ENCODE measurements at regions of chr11 and their contacts with region 1.

Region 1: DNA sequence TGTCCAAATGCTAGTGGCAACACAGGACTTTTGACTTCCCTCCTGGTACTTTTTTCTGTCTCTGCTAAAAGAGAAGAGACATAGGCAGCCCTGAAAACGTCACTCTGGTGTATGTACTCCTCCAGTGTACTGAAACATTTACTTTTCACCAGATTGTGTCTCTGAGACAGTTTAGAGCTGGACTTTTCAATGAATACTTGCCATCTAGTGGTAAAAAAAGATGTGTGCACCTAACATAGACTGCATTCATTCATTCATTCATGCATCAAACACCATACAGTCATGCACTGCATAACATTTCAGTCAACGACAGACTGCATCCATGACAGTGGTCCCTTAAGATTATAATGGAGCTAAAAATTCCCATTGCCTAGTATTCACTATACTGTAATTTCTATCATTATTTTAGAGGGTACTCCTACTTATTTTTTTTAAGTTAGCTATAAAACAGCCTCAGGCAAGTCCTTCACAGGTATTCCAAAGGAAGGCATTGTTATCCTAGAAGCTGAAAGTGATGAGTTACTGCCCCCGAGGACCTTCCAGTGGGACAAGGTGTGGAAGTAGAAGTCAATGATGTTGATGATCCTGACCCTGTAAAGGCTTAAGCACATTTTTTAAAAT is 186.2 kb downstream of the SPON1 start:
- DNase-seq: no peak
- ATAC-seq: peak; percentile 47 to 83 (median 58)
- H3K4me3 ChIP-seq: no peak overlapping the region
- H3K27ac ChIP-seq: no peak overlapping the region
- H3K4me1 ChIP-seq: no peaks in the 10 kb centered on the region
- H3K27me3 ChIP-seq: peaks cover 0 to 8% (median 0%) of the 10 kb centered on the region in 7 donors
- CTCF ChIP-seq: peak; percentile 24 to 73 (median 62)

Region 2: GRCh38 chr11:13772223-13773046 is 376.3 kb before region 1 on chr11:
- intact Hi-C with region 1: loop called in 3 of 10 experiments (anchors 5 to 10 kb)
- DNase-seq: peak in 1 of 2 donors; percentile 7
- ATAC-seq: peak in 3 of 8 donors; percentile 46 to 62 (median 56)
- H3K4me3 ChIP-seq: no peak overlapping the region
- H3K27ac ChIP-seq: no peak overlapping the region
- H3K4me1 ChIP-seq: no peaks in the 10 kb centered on the region
- H3K27me3 ChIP-seq: peaks cover 0 to 46% (median 28%) of the 10 kb centered on the region in 7 donors
- CTCF ChIP-seq: peak; percentile 14 to 65 (median 53)

Region 3: GRCh38 chr11:13955971-13956421 is 192.8 kb before region 1 on chr11:
- intact Hi-C with region 1: loop called in 9 of 10 experiments (anchors 1 to 5 kb)
- DNase-seq: peak in 1 of 2 donors; percentile 65
- ATAC-seq: peak; percentile 34 to 76 (median 66)
- H3K4me3 ChIP-seq: no peak overlapping the region
- H3K27ac ChIP-seq: no peak overlapping the region
- H3K4me1 ChIP-seq: peaks cover 0 to 6% (median 0%) of the 10 kb centered on the region in 9 donors
- H3K27me3 ChIP-seq: peaks cover 0 to 93% (median 44%) of the 10 kb centered on the region in 7 donors
- CTCF ChIP-seq: peak; percentile 66 to 92 (median 85)

Region 4: DNA sequence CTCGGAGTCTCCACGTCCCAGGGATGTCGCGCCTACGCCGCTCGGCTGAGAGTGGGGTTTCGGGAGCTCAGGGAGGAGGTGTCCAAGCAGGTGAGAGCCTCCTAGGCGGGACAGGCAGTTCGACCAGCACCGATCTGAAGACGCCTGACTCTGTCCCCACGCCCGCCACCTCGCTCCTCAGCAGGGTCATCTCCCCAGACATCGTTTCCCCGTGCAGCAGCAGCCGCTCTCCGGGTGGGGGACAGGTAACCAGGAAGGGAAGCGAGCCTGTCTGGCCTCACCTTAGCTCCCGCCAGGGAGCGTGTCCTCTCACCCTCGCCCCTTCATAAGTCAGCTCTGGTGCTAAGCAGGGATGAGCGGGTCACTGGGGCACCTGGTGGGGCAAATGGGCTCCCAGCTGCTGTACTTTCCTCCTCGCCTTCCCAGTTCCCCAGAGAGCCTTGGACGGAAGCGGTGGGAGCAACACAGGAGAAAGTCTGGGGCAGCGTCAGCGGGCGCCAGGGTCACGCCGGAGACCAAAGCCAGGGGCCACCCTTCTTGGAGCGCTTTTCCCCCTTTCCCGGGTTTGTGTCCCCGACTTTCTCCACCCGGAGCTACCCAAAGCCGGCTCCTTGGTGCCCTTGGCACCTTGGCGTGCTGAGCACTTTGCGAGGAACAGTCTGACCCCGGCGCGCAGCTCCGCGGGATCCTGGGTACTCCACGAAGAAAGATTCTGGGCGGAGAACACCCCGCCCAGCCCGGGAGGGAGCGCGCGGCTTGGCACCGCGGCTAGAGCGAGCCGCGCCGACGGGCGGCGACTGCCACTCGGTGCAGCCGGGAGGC is 184.6 kb before region 1 on chr11:
- intact Hi-C with region 1: loop called in 7 of 10 experiments (anchors 2 to 5 kb)
- DNase-seq: peak; percentile 8 to 41
- ATAC-seq: peak; percentile 25 to 70 (median 64)
- H3K4me3 ChIP-seq: peak overlapping the region; percentile 4 to 56 (median 48)
- H3K27ac ChIP-seq: peak overlapping the region in 5 of 10 donors; percentile 31 to 75 (median 52)
- H3K4me1 ChIP-seq: peaks cover 0 to 32% (median 15%) of the 10 kb centered on the region in 9 donors
- H3K27me3 ChIP-seq: peaks cover 20 to 99% (median 80%) of the 10 kb centered on the region in 7 donors
- CTCF ChIP-seq: peak in 1 of 9 donors; percentile 21

Region 5: GRCh38 chr11:13970986-13971385 is 177.8 kb before region 1 on chr11:
- intact Hi-C with region 1: loop called in 3 of 10 experiments (anchors 5 kb)
- DNase-seq: no peak
- ATAC-seq: peak; percentile 28 to 54 (median 46)
- H3K4me3 ChIP-seq: no peak overlapping the region
- H3K27ac ChIP-seq: no peak overlapping the region
- H3K4me1 ChIP-seq: peaks cover 0 to 22% (median 12%) of the 10 kb centered on the region in 9 donors
- H3K27me3 ChIP-seq: peaks cover 0 to 49% (median 36%) of the 10 kb centered on the region in 7 donors
- CTCF ChIP-seq: peak in 7 of 9 donors; percentile 18 to 50 (median 36)

Region 6: DNA sequence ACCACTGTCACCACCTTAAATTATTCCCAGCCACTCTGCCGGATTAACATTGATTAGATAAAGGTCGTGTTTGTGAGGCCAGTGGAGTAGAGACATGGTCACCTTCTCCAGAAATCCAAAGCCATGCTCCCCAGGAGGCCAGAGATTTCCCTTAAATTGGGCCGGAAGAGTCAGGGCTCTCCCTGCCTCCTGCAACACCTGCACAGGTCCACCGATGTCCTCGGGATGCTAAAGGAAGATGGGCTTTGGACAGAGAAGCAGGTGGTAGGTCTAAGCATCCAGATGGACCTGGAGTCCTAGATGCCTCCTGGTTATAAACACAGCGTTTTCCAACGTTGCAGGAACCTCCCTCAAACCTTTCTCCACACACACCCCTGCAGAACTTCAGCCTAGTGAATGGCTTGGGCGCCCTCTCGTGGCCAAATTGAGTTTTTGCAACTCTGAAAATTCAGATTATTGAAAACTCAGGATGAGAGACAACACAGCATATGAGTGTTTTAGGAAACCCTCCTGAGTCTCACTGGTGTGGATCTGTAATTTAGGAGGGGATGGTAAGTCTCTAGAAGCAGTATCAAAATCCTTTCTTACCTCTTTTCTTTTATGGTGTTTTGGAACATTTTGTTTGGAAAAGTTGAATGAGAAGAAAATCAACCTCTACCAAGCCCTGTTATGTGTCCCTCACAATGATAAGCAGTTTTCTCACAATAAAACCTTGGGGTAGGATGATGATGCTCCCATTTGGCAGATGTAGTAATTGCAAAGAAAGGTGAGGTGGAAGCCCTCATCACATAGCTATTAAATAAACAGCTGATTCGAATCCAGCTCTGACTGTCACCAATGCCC is 100.6 kb after region 1 on chr11:
- intact Hi-C with region 1: loop called in 3 of 10 experiments (anchors 10 kb)
- DNase-seq: peak; percentile 46 to 51
- ATAC-seq: peak; percentile 17 to 69 (median 48)
- H3K4me3 ChIP-seq: no peak overlapping the region
- H3K27ac ChIP-seq: no peak overlapping the region
- H3K4me1 ChIP-seq: peaks cover 0 to 20% (median 5%) of the 10 kb centered on the region in 9 donors
- H3K27me3 ChIP-seq: peaks cover 0 to 59% (median 16%) of the 10 kb centered on the region in 7 donors
- CTCF ChIP-seq: peak; percentile 83 to 95 (median 91)

Measured in heart right ventricle (tissue), 16 donors.